MCF 10A (cell line): ENCODE measurements at regions of chr19 and their contacts with region 1.

Region 1: DNA sequence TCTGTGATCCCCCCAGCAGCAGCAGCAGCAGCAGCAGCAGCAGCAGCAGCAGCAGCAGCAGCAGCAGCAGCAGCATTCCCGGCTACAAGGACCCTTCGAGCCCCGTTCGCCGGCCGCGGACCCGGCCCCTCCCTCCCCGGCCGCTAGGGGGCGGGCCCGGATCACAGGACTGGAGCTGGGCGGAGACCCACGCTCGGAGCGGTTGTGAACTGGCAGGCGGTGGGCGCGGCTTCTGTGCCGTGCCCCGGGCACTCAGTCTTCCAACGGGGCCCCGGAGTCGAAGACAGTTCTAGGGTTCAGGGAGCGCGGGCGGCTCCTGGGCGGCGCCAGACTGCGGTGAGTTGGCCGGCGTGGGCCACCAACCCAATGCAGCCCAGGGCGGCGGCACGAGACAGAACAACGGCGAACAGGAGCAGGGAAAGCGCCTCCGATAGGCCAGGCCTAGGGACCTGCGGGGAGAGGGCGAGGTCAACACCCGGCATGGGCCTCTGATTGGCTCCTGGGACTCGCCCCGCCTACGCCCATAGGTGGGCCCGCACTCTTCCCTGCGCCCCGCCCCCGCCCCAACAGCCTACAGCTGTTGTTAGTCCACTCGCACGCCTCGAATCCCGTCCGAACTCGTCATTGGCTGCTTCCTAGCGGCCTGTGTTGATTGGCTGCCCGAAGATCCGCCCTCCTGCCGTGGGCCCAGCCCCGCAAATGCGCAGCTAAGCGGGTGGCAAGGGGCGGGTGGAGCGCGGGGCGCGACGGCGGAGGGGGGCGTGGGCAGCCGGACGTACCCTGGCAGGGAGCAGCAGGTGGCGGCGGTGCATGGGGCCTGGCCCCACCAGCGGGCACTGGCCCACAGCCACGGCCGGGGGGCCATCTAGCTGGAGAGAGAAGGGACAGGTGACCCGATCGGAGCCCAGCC is 1.4 kb upstream of the SIX5 start:
- DNase-seq: peak; percentile 99
- H3K4me3 Mint-ChIP-seq: peak overlapping the region; percentile 84
- H3K27ac Mint-ChIP-seq: peak overlapping the region; percentile 82
- H3K4me1 Mint-ChIP-seq: peaks cover 12% of the 10 kb centered on the region
- H3K27me3 Mint-ChIP-seq: no peaks in the 10 kb centered on the region
- CTCF ChIP-seq: peak; percentile 86

Region 2: GRCh38 chr19:45692187-45693105 is 78.0 kb before region 1 on chr19 and contains the start of gene QPCTL:
- CTCF ChIA-PET with region 1: interaction called, 5 read pairs
- POLR2A ChIA-PET with region 1: interaction called, 100 read pairs
- intact Hi-C with region 1: loop called (anchors 1 kb)
- DNase-seq: peak; percentile 100
- H3K4me3 Mint-ChIP-seq: peak within 1 kb of the TSS; percentile 85
- H3K27ac Mint-ChIP-seq: peak within 1 kb of the TSS; percentile 95
- H3K4me1 Mint-ChIP-seq: peaks cover 6% of the 10 kb centered on the region
- H3K27me3 Mint-ChIP-seq: no peaks in the 10 kb centered on the region
- CTCF ChIP-seq: no peak
- total RNA-seq, gene QPCTL: 14.9 and 17.3 TPM in 2 replicates

Region 3: DNA sequence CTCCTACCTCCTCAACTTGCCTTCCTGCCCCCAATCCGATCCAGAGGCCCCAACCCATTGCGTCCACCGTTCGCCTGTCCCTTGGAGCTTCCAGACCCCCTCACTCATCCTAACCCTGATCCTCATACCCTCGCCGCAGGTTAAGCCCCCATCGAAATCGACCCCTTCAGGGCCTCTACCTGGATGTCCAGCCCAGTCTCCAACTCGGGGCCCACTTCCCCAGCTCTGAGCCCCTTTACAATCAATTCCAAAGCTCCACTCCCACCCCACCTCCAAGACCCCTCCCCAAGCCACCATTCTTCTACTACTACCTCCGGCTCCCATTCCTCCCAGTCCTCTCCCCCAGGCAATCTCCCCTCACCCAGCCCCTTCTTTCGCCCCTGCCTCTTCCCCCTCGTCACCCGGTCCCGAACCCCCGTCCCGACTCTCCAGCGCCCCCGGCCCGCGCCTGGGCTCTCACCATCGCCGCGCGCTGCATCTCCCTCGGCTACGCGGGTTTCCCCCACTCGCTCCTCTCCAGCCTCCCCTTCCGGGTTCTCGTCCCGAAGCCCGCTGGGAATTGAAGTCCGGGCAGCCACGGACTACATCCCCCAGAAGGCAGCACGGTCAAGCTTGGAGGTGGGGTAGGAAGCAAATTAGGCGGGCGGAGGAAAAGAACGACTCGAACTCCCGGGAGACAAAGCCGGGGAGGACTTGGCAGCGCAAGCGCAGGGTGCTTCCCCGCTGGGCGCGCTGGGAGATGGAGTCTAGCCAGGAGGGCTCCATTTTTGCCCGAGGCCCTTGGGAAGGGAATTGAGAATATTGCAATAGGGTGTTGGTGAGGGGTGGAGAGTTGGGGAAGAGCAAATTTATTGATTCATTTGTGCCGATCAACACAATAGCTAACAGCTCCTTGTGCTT is 39.8 kb before region 1 on chr19 and contains the start of gene FBXO46:
- CTCF ChIA-PET with region 1: interaction called, 12 read pairs
- POLR2A ChIA-PET with region 1: interaction called, 89 read pairs
- intact Hi-C with region 1: no loop called
- DNase-seq: peak; percentile 99
- H3K4me3 Mint-ChIP-seq: peak within 1 kb of the TSS; percentile 99
- H3K27ac Mint-ChIP-seq: peak within 1 kb of the TSS; percentile 82
- H3K4me1 Mint-ChIP-seq: peaks cover 13% of the 10 kb centered on the region
- H3K27me3 Mint-ChIP-seq: no peaks in the 10 kb centered on the region
- CTCF ChIP-seq: no peak
- total RNA-seq, gene FBXO46: 13.6 and 15.0 TPM in 2 replicates

Region 4: DNA sequence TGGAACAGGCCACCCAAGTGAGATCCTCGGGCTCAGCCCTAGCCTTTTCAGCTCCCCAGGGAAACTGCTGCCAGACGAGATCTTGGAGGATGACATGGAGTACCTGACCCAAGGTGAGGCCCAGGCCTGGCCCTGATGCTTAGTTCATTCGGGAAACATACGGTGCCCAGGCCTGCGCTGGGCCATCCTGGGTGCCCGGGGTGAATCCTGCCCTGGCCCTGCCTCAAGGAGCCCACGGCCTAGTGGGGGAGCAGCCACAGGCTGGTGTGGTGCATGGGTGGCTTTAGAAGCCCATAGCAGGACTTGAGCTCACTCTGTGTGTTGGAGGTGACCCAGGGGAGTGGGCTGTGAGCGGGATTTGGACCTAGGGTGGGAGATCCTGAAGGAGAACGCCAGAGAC is 11.5 kb before region 1 on chr19:
- CTCF ChIA-PET with region 1: interaction called, 3 read pairs
- POLR2A ChIA-PET with region 1: interaction called, 58 read pairs
- intact Hi-C with region 1: no loop called
- DNase-seq: no peak
- H3K4me3 Mint-ChIP-seq: no peak overlapping the region
- H3K27ac Mint-ChIP-seq: no peak overlapping the region
- H3K4me1 Mint-ChIP-seq: peaks cover 6% of the 10 kb centered on the region
- H3K27me3 Mint-ChIP-seq: no peaks in the 10 kb centered on the region
- CTCF ChIP-seq: no peak

Region 5: GRCh38 chr19:45798995-45799517 is 28.6 kb after region 1 on chr19:
- CTCF ChIA-PET with region 1: interaction called, 20 read pairs
- POLR2A ChIA-PET with region 1: interaction called, 41 read pairs
- intact Hi-C with region 1: loop called (anchors 1 kb)
- DNase-seq: peak; percentile 77
- H3K4me3 Mint-ChIP-seq: no peak overlapping the region
- H3K27ac Mint-ChIP-seq: no peak overlapping the region
- H3K4me1 Mint-ChIP-seq: no peaks in the 10 kb centered on the region
- H3K27me3 Mint-ChIP-seq: no peaks in the 10 kb centered on the region
- CTCF ChIP-seq: peak; percentile 80

Region 6: GRCh38 chr19:45960595-45961235 is 190.3 kb after region 1 on chr19:
- CTCF ChIA-PET with region 1: no interaction called
- POLR2A ChIA-PET with region 1: no interaction called
- intact Hi-C with region 1: no loop called
- DNase-seq: peak; percentile 23
- H3K4me3 Mint-ChIP-seq: no peak overlapping the region
- H3K27ac Mint-ChIP-seq: peak overlapping the region; percentile 1
- H3K4me1 Mint-ChIP-seq: peaks cover 21% of the 10 kb centered on the region
- H3K27me3 Mint-ChIP-seq: peaks cover 30% of the 10 kb centered on the region
- CTCF ChIP-seq: no peak